PC-3 (cell line): ENCODE measurements at regions of chr6 and their contacts with region 1.

Region 1: DNA sequence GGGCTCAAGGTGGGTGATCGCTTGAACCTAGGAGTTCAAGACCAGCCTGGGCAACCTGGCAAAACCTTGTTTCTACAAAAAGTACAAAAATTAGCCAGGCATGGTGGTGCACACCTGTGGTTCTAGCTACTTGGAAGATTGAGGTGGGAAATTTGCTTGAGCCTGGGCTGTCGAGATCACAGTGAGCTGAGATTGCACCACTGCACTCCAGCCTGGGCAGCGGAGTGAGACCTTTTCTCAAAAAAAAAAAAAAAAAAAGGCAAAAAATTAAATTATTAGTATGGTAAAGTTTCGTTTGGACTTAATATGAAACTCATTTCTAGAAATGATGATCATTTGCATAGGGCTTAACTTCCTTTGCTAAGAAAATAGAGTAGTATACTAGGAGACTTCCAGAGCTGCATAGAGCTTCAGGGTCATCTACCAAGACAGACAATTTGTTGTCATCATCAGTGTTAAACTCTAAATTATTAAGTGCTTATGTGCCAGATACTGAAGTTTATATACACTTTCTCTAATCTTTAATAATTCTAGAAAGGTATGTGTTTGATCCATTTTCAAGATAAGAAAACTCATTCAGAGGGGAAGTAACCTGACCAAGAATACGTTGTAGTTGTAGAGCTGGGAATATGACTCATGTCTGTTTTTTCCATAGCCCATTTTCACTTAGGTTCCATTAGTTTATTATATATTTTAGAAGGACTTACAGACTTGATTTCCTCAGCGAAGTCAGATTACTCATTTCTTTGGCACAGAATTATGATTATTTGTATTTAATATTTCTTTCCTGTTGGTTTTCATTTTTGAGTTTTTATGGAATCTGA is 84.5 kb downstream of the SLC16A10 start:
- DNase-seq: peak; percentile 4
- ATAC-seq: no peak
- H3K4me3 ChIP-seq: no peak overlapping the region
- H3K27ac ChIP-seq: no peak overlapping the region
- H3K4me1 ChIP-seq: no peaks in the 10 kb centered on the region
- H3K27me3 ChIP-seq: no peaks in the 10 kb centered on the region
- CTCF ChIP-seq: no peak

Region 2: GRCh38 chr6:110476046-110476849 is 695.5 kb before region 1 on chr6 and contains the start of gene SLC22A16:
- CTCF ChIA-PET with region 1: no interaction called
- POLR2A ChIA-PET with region 1: interaction called, 14 read pairs
- intact Hi-C with region 1: no loop called
- DNase-seq: no peak
- ATAC-seq: no peak
- H3K4me3 ChIP-seq: no peak within 1 kb of the TSS
- H3K27ac ChIP-seq: no peak within 1 kb of the TSS
- H3K4me1 ChIP-seq: no peaks in the 10 kb centered on the region
- H3K27me3 ChIP-seq: no peaks in the 10 kb centered on the region
- CTCF ChIP-seq: no peak
- total RNA-seq, gene SLC22A16: not detected in 2 replicates

Region 3: DNA sequence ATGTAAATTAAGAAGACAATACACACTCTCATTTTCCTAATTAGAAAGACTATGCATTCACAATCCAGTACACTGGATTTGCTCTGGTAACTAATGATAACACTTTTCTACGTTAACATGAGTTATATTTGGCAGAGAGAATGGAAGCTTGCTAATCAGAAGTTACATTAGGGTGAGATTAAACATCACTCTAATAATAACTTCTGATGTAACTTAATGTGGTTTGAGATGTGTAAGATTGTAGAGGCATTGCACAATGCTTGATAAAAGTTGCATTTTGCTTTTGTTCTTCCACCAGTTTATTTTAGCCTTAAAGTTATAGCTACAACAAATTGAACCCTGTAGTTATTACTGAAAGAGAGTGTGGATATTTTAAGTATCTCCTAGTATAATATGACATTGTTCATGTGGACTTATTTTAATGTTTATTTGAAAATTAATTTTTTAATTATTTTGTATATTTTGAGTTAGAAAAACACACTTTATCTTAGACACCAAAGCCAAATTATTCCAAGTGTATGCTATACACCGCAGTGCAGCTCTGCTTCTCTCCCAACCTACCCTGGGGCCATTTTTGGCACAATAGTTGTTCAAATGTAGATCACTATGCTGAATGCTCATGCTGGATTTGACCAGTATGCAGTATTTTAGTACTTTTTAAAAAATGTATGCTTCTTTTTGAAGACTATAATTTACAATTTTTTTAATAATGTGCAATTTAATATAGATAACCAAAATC is 58.7 kb after region 1 on chr6:
- CTCF ChIA-PET with region 1: no interaction called
- POLR2A ChIA-PET with region 1: no interaction called
- intact Hi-C with region 1: no loop called
- DNase-seq: no peak
- ATAC-seq: no peak
- H3K4me3 ChIP-seq: no peak overlapping the region
- H3K27ac ChIP-seq: no peak overlapping the region
- H3K4me1 ChIP-seq: peaks cover 15% of the 10 kb centered on the region
- H3K27me3 ChIP-seq: no peaks in the 10 kb centered on the region
- CTCF ChIP-seq: no peak